ENCODE measurements at regions of chr14 and their contacts with region 1.

Region 1: DNA sequence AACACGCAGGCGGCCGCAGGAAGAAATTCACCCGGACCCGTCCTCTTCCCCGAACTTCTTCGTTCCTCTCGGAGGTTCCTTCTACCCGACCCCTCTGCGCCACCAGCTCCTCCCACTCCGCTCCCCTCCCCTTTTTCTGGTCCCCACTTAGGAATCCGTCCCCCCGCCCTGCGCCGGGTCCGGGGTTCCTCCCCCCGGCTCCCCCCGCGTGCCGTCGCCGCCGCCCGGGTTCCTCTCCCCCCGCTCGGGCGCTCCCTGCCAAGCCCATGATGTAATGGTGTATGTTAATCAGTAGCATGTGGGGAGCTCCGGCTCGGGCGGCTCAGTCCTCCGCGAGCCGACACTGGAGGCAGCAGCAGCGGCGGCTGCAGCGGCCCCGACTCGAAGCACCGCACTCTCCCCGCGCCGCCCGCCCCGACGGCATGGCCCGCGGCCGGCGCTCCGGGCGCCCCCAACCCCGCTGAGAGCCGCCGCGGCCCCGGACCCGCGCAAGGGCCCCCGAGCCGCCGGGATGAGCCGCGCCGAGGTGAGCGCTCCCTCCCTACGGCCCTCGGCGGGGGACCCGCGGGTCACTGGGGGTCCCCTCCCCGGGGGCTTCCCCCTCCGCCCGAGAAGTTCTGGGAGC is 1.0 kb upstream of the SAMD4A start:
- DNase-seq: peak; percentile 61
- H3K4me3 Mint-ChIP-seq: peak overlapping the region; percentile 75
- H3K27ac Mint-ChIP-seq: no peak overlapping the region
- H3K4me1 Mint-ChIP-seq: peaks cover 21% of the 10 kb centered on the region
- H3K27me3 Mint-ChIP-seq: peaks cover 54% of the 10 kb centered on the region

Region 2: GRCh38 chr14:54411371-54411770 is 154.5 kb before region 1 on chr14:
- intact Hi-C with region 1: no loop called
- DNase-seq: no peak
- H3K4me3 Mint-ChIP-seq: no peak overlapping the region
- H3K27ac Mint-ChIP-seq: no peak overlapping the region
- H3K4me1 Mint-ChIP-seq: no peaks in the 10 kb centered on the region
- H3K27me3 Mint-ChIP-seq: no peaks in the 10 kb centered on the region

Region 3: DNA sequence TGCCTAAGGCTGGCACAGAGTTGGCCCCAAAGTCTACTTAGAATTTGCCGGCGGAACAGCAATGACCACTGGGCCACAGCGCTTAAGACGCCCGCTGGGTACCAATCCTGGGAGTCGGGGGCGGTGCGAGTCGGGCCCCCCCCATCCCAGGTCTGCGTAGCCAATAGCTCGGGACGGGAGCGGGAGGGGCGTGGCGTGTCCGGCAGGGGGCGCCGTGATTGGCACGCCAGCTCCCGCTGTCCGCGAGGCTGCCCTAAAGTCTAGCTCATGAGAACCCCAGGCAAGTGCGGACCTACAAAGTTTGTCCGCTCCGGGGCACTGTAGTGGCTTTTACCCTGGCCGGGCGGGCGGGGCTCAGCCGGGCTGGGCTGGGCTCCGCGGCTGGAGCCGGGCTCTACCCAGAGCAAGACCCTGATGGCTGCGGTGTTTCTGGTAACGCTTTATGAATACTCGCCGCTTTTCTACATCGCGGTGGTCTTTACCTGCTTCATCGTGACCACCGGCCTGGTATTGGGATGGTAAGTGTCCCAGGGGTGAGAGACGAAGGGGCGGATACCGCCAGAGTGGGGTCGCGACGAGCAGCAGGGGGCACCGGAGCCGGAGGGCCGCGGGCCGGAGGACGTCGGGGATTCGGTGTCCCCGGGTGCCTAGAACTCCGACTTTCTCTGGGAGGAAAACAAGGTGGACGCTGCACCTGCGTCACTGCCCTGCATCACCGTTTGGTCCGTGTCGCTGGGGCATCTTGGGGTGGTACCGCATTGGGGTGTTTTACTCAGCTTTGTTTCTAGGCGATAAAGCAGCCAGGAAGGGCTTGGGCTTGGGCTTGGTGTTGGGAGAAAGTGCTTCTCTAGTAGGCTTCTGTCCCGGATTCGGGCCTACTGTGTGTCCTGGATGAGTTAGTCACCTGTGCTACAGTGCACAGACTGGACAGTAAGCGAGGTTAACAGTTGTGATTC is 56.1 kb before region 1 on chr14 and contains the start of gene CGRRF1:
- intact Hi-C with region 1: loop called (anchors 1 kb)
- DNase-seq: peak; percentile 94
- H3K4me3 Mint-ChIP-seq: peak within 1 kb of the TSS; percentile 95
- H3K27ac Mint-ChIP-seq: peak within 1 kb of the TSS; percentile 83
- H3K4me1 Mint-ChIP-seq: peaks cover 40% of the 10 kb centered on the region
- H3K27me3 Mint-ChIP-seq: peaks cover 8% of the 10 kb centered on the region
- total RNA-seq, gene CGRRF1: 8.5 and 13.2 TPM in 2 replicates

Region 4: GRCh38 chr14:54642801-54643697 is 77.2 kb after region 1 on chr14:
- intact Hi-C with region 1: loop called (anchors 1 kb)
- DNase-seq: no peak
- H3K4me3 Mint-ChIP-seq: no peak overlapping the region
- H3K27ac Mint-ChIP-seq: no peak overlapping the region
- H3K4me1 Mint-ChIP-seq: peaks cover 6% of the 10 kb centered on the region
- H3K27me3 Mint-ChIP-seq: peaks cover 16% of the 10 kb centered on the region

Region 5: GRCh38 chr14:54805521-54806322 is 239.8 kb after region 1 on chr14:
- intact Hi-C with region 1: loop called (anchors 1 kb)
- DNase-seq: peak; percentile 48
- H3K4me3 Mint-ChIP-seq: no peak overlapping the region
- H3K27ac Mint-ChIP-seq: no peak overlapping the region
- H3K4me1 Mint-ChIP-seq: no peaks in the 10 kb centered on the region
- H3K27me3 Mint-ChIP-seq: peaks cover 10% of the 10 kb centered on the region

Measured in activated T-helper 1 cell treated with anti-CD3 and anti-CD28 coated beads, Interleukin-12 subunit alpha, Interleukin-12 subunit beta, Interleukin-2, Interleukin-4 antibody, amounts not matched to agents 30 ng/mL and 10 ng/mL and 1 ng/mL, durations not matched to agents 14 hours and 24 hours and 36 hours (primary cell).